ENCODE measurements at regions of chr3 and their contacts with region 1.

Region 1: DNA sequence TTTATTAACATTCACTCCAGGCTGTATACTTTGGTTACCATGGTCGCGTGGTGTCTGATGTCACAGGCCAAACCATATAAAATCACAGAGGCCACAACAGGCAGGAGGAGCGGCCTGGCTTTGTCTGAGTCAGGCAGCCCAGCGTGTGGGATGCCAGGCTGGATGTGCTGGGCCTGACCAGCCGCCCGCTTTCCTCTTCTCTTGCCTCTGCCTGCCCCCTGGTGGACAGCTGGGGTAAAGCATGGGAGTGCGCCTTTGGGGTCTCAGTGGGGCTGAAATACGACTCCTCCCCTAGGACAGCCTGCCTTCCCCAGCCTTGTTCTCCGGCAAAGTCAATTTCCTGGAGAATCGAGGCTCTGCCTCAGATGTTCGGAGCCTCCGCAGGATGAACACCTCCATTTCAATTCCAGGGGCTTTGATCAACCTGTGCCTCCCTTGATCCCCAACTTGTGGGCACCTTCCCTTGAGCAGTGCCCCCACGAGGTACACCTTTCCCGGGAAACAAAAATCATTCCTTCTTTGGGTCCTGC is 78.2 kb downstream of the CCNL1 start:
- DNase-seq: peak; percentile 95 to 98
- H3K4me3 ChIP-seq: peak overlapping the region; percentile 9; the same call in 1 of the 2 replicates
- H3K27ac ChIP-seq: peak overlapping the region; percentile 92
- H3K4me1 ChIP-seq: peaks cover 49% of the 10 kb centered on the region
- H3K27me3 ChIP-seq: no peaks in the 10 kb centered on the region
- CTCF ChIP-seq: peak; percentile 100

Region 2: DNA sequence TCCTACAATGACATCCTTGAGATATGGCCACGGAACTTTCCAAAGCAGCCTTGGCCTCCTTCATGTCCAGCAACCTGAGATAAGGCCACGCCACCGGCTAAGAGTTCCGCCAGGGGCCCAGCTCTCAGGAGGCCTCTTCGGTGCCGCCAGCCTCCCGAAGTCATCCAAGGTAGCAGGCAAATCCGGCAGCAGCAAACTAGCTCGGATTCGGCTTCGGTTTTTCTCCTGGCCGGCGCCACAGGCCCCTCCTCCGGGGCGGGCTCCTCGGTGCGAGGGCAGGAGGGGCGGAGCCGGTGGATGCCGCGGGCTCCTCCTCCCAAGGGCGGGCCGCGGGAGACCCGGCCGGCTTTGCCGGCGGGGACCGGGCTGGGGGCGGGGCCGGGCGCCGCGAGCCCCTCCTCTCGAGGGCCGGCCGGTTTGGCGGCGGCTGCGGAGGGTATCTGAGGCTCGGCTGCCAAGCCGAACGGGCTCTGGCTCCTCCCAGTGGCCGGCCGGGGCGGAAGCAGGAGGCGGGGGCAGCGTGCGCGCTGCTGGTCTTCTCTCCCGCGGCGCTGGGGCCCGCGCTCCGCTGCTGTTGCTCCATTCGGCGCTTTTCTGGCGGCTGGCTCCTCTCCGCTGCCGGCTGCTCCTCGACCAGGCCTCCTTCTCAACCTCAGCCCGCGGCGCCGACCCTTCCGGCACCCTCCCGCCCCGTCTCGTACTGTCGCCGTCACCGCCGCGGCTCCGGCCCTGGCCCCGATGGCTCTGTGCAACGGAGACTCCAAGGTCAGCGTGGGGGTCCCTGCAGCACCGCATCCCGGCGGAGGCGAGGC is 1211.4 kb before region 1 on chr3 and contains the start of gene GMPS:
- CTCF ChIA-PET with region 1: no interaction called
- POLR2A ChIA-PET with region 1: no interaction called
- intact Hi-C with region 1: loop called (anchors 10 kb)
- DNase-seq: peak; percentile 84 to 99
- H3K4me3 ChIP-seq: peak within 1 kb of the TSS; percentile 91
- H3K27ac ChIP-seq: peak within 1 kb of the TSS; percentile 79
- H3K4me1 ChIP-seq: peaks cover 21% of the 10 kb centered on the region
- H3K27me3 ChIP-seq: no peaks in the 10 kb centered on the region
- CTCF ChIP-seq: peak; percentile 58
- total RNA-seq, gene GMPS: 116 and 139 TPM in 2 replicates

Region 3: DNA sequence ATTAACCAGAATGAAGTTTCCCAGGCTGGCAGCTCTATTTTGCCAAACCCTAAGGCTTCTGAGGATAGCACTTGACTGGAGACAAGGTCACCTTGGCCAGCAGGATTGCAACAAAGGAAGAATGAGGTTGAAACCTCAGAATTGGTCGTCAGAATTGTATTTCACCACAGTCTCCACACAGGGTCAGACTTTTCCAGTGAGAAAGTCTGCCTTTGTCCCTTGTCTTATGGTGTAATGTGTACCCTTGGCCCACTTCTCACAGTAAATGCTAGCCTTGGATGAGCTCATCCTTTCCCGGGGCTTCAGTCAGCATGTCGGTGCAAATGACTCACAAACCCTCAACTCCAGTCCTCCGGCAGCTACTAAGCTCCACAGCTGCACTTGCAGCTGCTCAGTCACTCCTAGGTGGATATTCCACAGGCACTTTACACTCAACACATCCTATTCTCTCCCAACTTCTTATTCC is 546.6 kb before region 1 on chr3:
- CTCF ChIA-PET with region 1: interaction called, 3 read pairs
- POLR2A ChIA-PET with region 1: no interaction called
- intact Hi-C with region 1: loop called (anchors 1 kb)
- DNase-seq: peak; percentile 70 to 98
- H3K4me3 ChIP-seq: no peak overlapping the region
- H3K27ac ChIP-seq: peak overlapping the region; percentile 72
- H3K4me1 ChIP-seq: peaks cover 21% of the 10 kb centered on the region
- H3K27me3 ChIP-seq: no peaks in the 10 kb centered on the region
- CTCF ChIP-seq: peak; percentile 59

Region 4: GRCh38 chr3:156630081-156630772 is 451.5 kb before region 1 on chr3:
- CTCF ChIA-PET with region 1: interaction called, 3 read pairs
- POLR2A ChIA-PET with region 1: no interaction called
- intact Hi-C with region 1: loop called (anchors 2 kb)
- DNase-seq: peak; percentile 53 to 93
- H3K4me3 ChIP-seq: no peak overlapping the region
- H3K27ac ChIP-seq: peak overlapping the region; percentile 84
- H3K4me1 ChIP-seq: peaks cover 67% of the 10 kb centered on the region
- H3K27me3 ChIP-seq: no peaks in the 10 kb centered on the region
- CTCF ChIP-seq: no peak

Region 5: DNA sequence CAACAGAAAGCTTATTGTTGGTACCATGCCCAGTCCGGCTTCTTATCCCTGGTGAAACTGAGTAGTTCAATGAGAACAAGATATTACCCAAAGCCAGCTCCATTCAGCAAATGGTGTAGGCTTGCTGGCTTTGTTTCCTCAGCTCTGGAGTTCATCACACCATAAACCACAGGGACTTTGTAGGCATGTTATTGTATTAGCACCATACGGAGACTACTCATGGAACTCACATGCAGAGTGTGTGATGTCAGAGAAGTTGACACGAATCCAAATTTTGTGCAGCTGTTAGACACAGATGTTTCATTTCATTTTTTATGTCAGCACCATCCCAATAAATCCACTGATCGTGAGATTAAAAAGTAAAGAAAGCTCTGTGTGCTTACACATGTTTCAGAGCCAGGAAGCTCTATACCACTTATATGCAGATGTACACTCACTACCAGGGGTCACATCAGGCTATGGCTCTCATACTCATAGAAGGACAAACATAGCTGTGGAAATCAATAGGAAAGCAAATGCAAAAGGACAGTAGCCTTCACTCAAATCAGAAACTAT is 319.0 kb before region 1 on chr3:
- CTCF ChIA-PET with region 1: no interaction called
- POLR2A ChIA-PET with region 1: no interaction called
- intact Hi-C with region 1: no loop called
- DNase-seq: no peak
- H3K4me3 ChIP-seq: no peak overlapping the region
- H3K27ac ChIP-seq: no peak overlapping the region
- H3K4me1 ChIP-seq: no peaks in the 10 kb centered on the region
- H3K27me3 ChIP-seq: no peaks in the 10 kb centered on the region
- CTCF ChIP-seq: no peak

Region 6: GRCh38 chr3:156826144-156826895 is 255.4 kb before region 1 on chr3 and contains the start of gene LEKR1:
- CTCF ChIA-PET with region 1: no interaction called
- POLR2A ChIA-PET with region 1: no interaction called
- intact Hi-C with region 1: loop called (anchors 1 kb)
- DNase-seq: peak; percentile 91 to 98
- H3K4me3 ChIP-seq: peak within 1 kb of the TSS; percentile 63
- H3K27ac ChIP-seq: peak within 1 kb of the TSS; percentile 100
- H3K4me1 ChIP-seq: peaks cover 26% of the 10 kb centered on the region
- H3K27me3 ChIP-seq: no peaks in the 10 kb centered on the region
- CTCF ChIP-seq: no peak; the same call in 1 of the 2 replicates
- total RNA-seq, gene LEKR1: 3.2 and 3.9 TPM in 2 replicates

Measured in PC-9 (cell line).